ENCODE measurements at regions of chr2 and their contacts with region 1.

Region 1: DNA sequence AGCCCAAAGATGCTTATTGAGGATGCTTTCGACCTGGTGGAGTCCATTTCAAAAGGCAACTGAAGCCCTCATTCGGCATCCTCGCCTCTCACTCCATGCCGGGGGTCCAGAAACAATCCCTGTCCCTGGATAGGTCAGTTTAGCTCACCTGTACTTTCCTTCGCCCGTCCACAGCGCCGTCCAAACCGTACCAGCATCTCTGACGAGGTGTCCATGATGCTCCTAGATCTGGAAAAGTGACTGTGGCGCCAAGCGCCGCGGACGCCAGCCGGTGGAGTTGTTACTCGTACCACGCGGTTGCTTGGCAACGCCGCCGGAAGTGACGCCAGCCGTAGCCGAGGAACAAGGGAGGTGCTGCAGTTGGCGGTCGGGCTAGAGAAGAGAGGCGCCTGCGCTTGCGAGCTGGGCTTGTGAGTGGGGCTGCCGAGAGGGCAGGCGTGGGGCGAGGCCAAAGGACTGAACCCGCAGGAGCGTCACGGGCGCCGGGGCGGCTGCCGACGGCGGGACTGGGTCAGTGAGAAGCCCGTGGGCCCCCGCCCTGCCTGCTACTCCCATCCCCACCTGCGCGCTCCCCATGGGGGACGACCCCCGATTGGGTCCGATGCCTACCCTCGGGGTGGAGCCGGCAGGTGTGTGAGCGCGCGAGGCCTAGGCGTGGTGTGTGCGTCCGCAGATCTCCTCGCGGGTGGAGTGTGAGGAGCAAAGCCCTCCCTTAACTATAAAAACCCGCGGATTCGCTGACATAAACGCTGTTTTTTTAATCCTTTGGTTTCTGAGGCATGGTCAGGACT is at the starts of genes CFAP210 and PHOSPHO2:
- DNase-seq: peak; percentile 98
- ATAC-seq: peak; percentile 95
- H3K4me3 ChIP-seq: peak within 1 kb of the TSS; percentile 70
- H3K27ac ChIP-seq: peak within 1 kb of the TSS; percentile 78
- H3K4me1 ChIP-seq: peaks cover 21% of the 10 kb centered on the region
- H3K27me3 ChIP-seq: no peaks in the 10 kb centered on the region
- CTCF ChIP-seq: no peak
- total RNA-seq, gene CFAP210: not detected in 2 replicates
- total RNA-seq, gene PHOSPHO2: 5.0 and 5.9 TPM in 2 replicates

Region 2: DNA sequence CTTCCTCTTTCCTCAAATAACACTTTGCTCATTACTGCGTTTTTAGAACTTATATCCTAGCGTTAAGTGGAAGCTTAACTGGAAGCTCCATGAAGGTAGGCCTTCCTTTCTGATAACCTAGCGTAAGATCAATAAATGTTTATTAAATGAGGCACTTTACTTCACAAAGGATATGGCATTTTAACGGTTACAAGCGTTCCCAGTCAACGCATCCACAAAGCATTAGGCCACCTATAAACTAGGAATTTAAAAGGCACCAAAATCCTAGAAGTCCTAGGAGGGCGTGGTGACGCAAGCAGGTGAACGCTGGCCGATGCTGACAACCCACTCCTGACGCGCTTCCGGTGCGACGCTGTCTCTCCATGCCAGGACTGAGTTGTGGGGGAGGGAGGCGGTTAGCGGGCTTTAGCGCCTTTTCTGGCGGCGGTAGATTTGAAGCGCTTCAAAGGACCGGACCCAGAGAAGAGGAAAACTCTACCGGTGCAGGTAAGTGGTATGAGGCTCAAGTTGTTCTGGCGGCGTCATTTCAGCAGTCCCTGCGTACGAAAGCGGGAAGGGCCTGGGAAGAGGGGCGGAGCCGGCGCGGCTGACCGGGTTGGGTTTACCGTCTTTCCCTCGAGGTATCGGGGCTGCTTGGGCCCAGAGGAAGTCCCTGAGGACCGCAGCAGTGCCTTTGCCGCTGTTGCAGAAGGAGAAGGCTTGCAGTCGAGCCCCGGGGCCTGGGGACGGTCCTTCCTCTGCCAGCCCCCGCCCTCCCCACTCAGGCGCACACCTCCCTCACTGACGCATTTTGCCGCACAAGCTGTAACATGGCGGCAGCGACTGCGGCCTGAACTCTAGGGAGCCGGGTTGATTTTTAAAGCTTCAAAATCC is 110.1 kb before region 1 on chr2 and contains the start of gene PPIG:
- CTCF ChIA-PET with region 1: no interaction called
- POLR2A ChIA-PET with region 1: no interaction called
- intact Hi-C with region 1: loop called (anchors 10 kb)
- DNase-seq: peak; percentile 90
- ATAC-seq: peak; percentile 89
- H3K4me3 ChIP-seq: peak within 1 kb of the TSS; percentile 88
- H3K27ac ChIP-seq: peak within 1 kb of the TSS; percentile 82
- H3K4me1 ChIP-seq: peaks cover 5% of the 10 kb centered on the region; the same call in 1 of the 2 replicates
- H3K27me3 ChIP-seq: no peaks in the 10 kb centered on the region
- CTCF ChIP-seq: no peak
- total RNA-seq, gene PPIG: 20.9 and 33.7 TPM in 2 replicates

Region 3: GRCh38 chr2:169715379-169716237 is 21.3 kb after region 1 on chr2:
- CTCF ChIA-PET with region 1: no interaction called
- POLR2A ChIA-PET with region 1: interaction called, 5 read pairs
- intact Hi-C with region 1: loop called (anchors 2 kb)
- DNase-seq: peak; percentile 74
- ATAC-seq: peak; percentile 68
- H3K4me3 ChIP-seq: peak overlapping the region; percentile 50
- H3K27ac ChIP-seq: no peak overlapping the region
- H3K4me1 ChIP-seq: peaks cover 26% of the 10 kb centered on the region
- H3K27me3 ChIP-seq: no peaks in the 10 kb centered on the region
- CTCF ChIP-seq: no peak

Region 4: GRCh38 chr2:169732583-169733358 is 38.5 kb after region 1 on chr2:
- CTCF ChIA-PET with region 1: no interaction called
- POLR2A ChIA-PET with region 1: no interaction called
- intact Hi-C with region 1: loop called (anchors 1 kb)
- DNase-seq: no peak
- ATAC-seq: peak; percentile 1; the same call in 1 of the 2 replicates
- H3K4me3 ChIP-seq: peak overlapping the region; percentile 82
- H3K27ac ChIP-seq: no peak overlapping the region
- H3K4me1 ChIP-seq: peaks cover 35% of the 10 kb centered on the region
- H3K27me3 ChIP-seq: no peaks in the 10 kb centered on the region
- CTCF ChIP-seq: no peak

Measured in PC-3 (cell line).